Posterior vena cava (tissue), 2 donors: ENCODE measurements at regions of chr5 and their contacts with region 1.

Region 1: GRCh38 chr5:14765587-14765986 is 101.1 kb downstream of the OTULIN start:
- DNase-seq: no peak

Region 2: GRCh38 chr5:14732991-14733390 is 32.6 kb before region 1 on chr5:
- intact Hi-C with region 1: loop called in 1 of 2 experiments (anchors 2 kb)
- DNase-seq: no peak

Region 3: GRCh38 chr5:15092801-15093200 is 327.2 kb after region 1 on chr5:
- intact Hi-C with region 1: no loop called
- DNase-seq: no peak